ENCODE measurements at regions of chr3 and their contacts with region 1.

Region 1: GRCh38 chr3:45938864-45939263 is 4.4 kb upstream of the CXCR6 start:
- DNase-seq: peak; percentile 92
- H3K4me3 Mint-ChIP-seq: no peak overlapping the region
- H3K27ac Mint-ChIP-seq: no peak overlapping the region
- H3K4me1 Mint-ChIP-seq: peaks cover 38% of the 10 kb centered on the region
- H3K27me3 Mint-ChIP-seq: peaks cover 7% of the 10 kb centered on the region

Region 2: DNA sequence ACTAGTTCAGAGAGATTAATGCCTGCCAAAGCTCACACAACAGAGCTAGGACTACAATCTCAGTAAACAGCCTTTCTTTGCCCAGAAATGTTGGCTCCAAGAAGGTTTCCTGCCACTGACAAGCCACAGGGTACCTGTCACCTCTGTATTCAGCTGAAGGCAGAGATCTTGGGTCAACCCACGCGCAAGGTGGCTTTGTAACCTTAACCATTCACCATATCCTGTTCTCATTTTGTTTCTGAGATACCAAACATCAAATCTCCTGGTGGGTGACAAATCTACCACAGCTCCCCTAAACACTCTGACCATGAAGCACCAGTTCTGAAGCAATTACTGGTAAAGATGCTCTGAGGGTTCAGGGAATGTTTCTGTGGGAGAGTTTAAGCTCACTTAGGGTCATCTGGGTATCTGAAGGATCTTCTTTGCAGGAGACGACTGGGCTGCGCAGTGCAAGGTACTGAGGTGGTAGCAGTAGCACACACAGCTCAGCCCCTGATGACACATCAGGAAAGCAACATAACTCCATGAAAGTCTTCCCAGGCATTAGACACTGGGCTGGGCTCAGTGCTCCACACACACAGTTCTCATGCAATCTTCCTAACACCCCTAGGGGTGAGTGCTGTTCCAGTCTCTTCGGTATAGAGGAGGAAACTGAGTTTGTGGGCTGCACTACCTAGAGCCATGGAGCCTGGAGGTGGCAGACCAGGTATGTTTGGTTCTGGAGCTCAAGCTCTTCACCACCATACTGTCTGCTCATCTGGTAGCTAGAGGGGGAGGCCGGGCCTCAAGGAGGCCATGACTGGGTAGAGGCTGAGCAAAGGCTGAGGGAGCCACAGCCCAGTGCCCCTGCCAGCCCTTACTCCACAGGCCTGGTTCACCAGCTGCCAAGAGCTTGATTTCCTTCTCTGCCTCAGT is 12.1 kb after region 1 on chr3:
- CTCF ChIA-PET with region 1: interaction called, 24 read pairs
- DNase-seq: peak; percentile 72
- H3K4me3 Mint-ChIP-seq: no peak overlapping the region
- H3K27ac Mint-ChIP-seq: peak overlapping the region; percentile 86
- H3K4me1 Mint-ChIP-seq: peaks cover 47% of the 10 kb centered on the region
- H3K27me3 Mint-ChIP-seq: no peaks in the 10 kb centered on the region

Region 3: GRCh38 chr3:45962033-45962432 is 23.2 kb after region 1 on chr3:
- CTCF ChIA-PET with region 1: interaction called, 10 read pairs
- DNase-seq: no peak
- H3K4me3 Mint-ChIP-seq: no peak overlapping the region
- H3K27ac Mint-ChIP-seq: no peak overlapping the region
- H3K4me1 Mint-ChIP-seq: peaks cover 54% of the 10 kb centered on the region
- H3K27me3 Mint-ChIP-seq: no peaks in the 10 kb centered on the region

Region 4: DNA sequence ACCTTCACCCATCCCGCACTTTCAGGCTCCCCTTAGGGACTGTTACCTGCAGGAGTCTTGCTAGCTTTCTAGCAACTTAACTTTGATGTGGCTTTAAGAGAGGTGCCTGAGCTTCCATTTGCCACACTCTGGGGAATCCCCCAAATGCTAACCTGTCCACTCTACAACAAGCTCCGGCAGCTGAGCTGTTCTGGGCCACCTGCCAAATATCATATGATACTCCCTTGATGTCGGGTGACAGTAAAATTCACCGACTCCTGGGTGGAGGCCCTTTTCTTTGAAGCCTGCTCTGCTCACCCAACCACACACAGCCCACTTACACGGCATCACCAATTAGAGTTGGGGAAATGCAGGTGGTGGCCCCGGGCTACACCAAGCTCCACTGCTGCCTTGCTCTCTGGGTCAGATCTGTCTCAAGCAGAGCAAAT is 126.4 kb after region 1 on chr3:
- CTCF ChIA-PET with region 1: interaction called, 25 read pairs
- DNase-seq: peak; percentile 85
- H3K4me3 Mint-ChIP-seq: peak overlapping the region; percentile 29
- H3K27ac Mint-ChIP-seq: peak overlapping the region; percentile 61
- H3K4me1 Mint-ChIP-seq: peaks cover 62% of the 10 kb centered on the region
- H3K27me3 Mint-ChIP-seq: peaks cover 78% of the 10 kb centered on the region

Region 5: DNA sequence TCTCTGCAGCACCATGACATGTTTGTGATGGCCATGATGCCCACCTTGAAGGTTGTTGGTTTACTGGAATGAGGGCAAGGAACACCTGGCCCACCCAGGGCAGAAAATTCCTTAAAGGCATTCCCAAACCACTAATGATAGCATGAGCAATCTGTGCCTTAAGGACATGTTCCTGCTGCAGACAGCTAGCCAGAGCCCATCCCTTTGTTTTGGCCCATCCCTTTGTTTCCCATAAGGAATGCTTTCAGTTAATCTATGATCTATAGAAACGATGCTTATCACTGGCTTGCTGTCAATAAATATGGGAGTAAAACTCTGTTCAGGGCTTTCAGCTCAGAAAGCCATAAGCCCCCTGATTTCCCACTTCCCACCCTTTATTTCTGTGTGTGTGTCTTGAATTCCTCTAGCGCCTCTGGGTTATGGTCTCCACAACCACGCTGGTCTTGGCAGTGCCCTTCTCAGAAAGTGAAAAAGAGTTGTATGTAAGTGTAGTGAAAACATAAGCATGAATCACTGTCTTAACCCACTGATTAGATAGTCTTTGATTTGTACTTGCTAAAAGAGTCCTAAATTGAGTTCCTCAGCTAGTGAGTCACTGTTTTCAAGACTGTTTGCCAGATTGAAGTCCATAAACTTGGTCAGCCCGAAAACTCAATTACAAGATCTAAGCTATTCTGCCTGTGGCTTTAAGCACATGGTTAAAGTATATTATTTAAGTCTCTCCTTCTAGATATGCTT is 396.0 kb after region 1 on chr3:
- CTCF ChIA-PET with region 1: no interaction called
- DNase-seq: no peak
- H3K4me3 Mint-ChIP-seq: no peak overlapping the region
- H3K27ac Mint-ChIP-seq: no peak overlapping the region
- H3K4me1 Mint-ChIP-seq: peaks cover 23% of the 10 kb centered on the region
- H3K27me3 Mint-ChIP-seq: peaks cover 15% of the 10 kb centered on the region

Measured in activated naive CD4-positive, alpha-beta T cell treated with anti-CD3 and anti-CD28 coated beads, Interleukin-2, amount 10 ng/mL, durations not matched to agents 7 days and 5 days (primary cell).